ENCODE measurements at regions of chrX and their contacts with region 1.

Region 1: GRCh38 chrX:2261831-2262667 is 238.7 kb downstream of the DHRSX start:
- DNase-seq: peak; percentile 32

Region 2: DNA sequence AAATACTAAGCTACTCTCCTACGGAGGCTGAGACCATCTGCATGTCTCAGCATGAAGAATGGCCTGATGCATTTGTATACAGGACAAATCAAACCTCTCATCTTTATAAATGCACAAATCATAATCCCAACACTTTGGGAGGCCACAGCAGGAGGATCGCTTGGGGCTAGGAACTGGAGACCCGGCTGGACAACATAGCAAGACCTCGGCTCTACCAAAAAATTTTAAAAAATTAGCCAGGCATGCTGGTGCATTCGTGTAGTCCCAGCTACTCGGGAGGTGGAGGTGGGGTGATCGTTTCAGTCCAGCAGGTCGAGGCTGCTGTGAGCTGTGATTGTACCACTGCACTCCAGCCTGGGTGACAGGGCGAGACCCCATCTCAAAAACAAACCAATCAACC is 24.1 kb before region 1 on chrX:
- intact Hi-C with region 1: no loop called
- DNase-seq: peak; percentile 19

Region 3: GRCh38 chrX:2334237-2334636 is 72.2 kb after region 1 on chrX:
- intact Hi-C with region 1: loop called in 1 of 2 experiments (anchors 2 kb)
- DNase-seq: no peak

Measured in posterior vena cava (tissue), 2 donors.